ENCODE measurements at regions of chr1 and their contacts with region 1.

Region 1: GRCh38 chr1:25549273-25550154 is 6.1 kb downstream of the LDLRAP1 start:
- DNase-seq: peak; percentile 95
- H3K4me3 Mint-ChIP-seq: peak overlapping the region; percentile 66
- H3K27ac Mint-ChIP-seq: peak overlapping the region; percentile 93
- H3K4me1 Mint-ChIP-seq: peaks cover 86% of the 10 kb centered on the region
- H3K27me3 Mint-ChIP-seq: no peaks in the 10 kb centered on the region

Region 2: DNA sequence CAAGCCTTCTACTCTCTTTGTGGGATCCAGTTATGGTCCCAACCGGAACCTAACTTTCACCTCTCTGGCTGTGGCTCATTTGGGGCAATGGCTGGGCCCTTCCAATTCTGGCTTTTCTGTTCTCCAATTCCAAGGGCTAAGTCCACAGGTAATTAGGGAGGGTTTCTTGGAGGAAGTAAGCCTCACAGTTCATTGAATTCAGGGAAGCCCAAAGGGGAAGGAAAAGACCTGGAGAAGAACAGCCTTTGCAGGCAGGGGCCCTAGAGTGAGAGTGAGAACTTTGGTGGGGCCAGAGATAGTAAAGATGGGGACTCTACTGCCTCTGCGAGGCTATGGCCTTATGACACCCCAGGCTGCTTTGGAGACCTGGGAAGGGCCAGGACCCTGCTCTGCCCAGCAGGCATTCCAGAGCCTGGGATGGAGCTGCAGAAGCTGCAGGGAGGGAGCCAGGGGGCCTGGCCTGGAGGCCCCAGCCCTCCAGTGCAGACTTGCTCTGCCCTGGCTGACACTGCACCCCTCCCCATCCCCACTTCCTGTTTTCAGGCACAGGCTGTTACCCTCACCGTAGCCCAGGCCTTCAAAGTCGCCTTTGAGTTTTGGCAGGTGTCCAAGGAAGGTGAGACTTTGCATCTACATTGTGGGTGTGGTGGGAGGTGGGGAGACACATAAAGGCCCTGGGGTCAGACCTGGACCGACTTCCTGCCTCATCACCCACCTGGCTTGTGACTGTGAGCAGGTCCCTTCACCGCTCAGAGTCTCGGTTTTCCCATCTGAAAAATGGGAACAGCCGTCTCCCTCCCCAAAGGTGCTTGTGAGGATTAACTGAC is 12.8 kb after region 1 on chr1:
- CTCF ChIA-PET with region 1: interaction called, 10 read pairs
- POLR2A ChIA-PET with region 1: interaction called, 8 read pairs
- intact Hi-C with region 1: loop called (anchors 1 kb)
- DNase-seq: peak; percentile 82
- H3K4me3 Mint-ChIP-seq: peak overlapping the region; percentile 62
- H3K27ac Mint-ChIP-seq: peak overlapping the region; percentile 85
- H3K4me1 Mint-ChIP-seq: peaks cover 91% of the 10 kb centered on the region
- H3K27me3 Mint-ChIP-seq: no peaks in the 10 kb centered on the region

Region 3: GRCh38 chr1:25572708-25573600 is 23.4 kb after region 1 on chr1:
- CTCF ChIA-PET with region 1: interaction called, 23 read pairs
- POLR2A ChIA-PET with region 1: interaction called, 4 read pairs
- intact Hi-C with region 1: no loop called
- DNase-seq: peak; percentile 66
- H3K4me3 Mint-ChIP-seq: no peak overlapping the region
- H3K27ac Mint-ChIP-seq: no peak overlapping the region
- H3K4me1 Mint-ChIP-seq: peaks cover 23% of the 10 kb centered on the region
- H3K27me3 Mint-ChIP-seq: no peaks in the 10 kb centered on the region

Region 4: GRCh38 chr1:25675729-25676476 is 126.4 kb after region 1 on chr1:
- CTCF ChIA-PET with region 1: no interaction called
- POLR2A ChIA-PET with region 1: no interaction called
- intact Hi-C with region 1: loop called (anchors 5 kb)
- DNase-seq: peak; percentile 96
- H3K4me3 Mint-ChIP-seq: peak overlapping the region; percentile 59
- H3K27ac Mint-ChIP-seq: peak overlapping the region; percentile 69
- H3K4me1 Mint-ChIP-seq: peaks cover 71% of the 10 kb centered on the region
- H3K27me3 Mint-ChIP-seq: peaks cover 15% of the 10 kb centered on the region

Region 5: DNA sequence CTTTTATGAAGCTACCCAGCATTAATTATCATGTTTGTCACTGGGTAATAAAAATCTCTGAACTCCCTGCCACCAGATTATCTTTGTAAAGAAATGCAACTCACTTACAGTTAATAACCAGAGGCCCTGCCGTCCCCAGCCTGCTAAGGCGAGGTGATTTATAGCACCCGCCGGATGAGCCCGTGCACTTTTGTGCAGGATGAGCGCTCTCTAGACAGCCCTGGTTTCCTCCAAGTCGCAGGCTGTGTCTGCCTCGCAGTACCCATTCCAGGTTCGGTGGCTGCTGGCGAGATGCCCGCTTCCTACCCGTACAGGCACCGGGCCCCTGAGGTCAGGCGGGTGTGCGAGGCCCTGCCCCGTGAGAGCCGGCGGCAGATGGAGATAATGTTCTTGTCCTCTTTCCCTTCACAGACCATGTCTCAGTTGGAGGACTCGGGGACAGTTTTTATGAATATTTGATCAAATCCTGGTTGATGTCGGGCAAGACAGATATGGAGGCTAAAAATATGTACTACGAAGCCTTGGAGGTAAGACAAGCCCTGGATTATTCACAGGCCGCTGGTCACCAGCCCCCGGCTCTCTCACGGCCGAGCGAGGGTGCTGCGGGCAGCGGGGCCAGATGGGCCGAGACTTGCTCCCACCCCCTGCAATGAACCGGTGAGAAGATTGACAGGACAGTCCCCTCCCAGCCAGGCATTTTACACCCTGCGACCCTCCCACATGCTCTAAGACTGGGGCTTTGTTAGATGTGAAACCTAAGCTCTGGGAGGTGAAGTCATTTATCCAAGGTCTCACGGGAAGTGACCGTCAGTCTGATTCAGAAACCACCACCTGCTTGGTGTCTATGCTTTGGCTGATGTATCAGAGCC is 222.0 kb after region 1 on chr1:
- CTCF ChIA-PET with region 1: no interaction called
- POLR2A ChIA-PET with region 1: interaction called, 3 read pairs
- intact Hi-C with region 1: loop called (anchors 1 kb)
- DNase-seq: peak; percentile 30
- H3K4me3 Mint-ChIP-seq: no peak overlapping the region
- H3K27ac Mint-ChIP-seq: no peak overlapping the region
- H3K4me1 Mint-ChIP-seq: peaks cover 58% of the 10 kb centered on the region
- H3K27me3 Mint-ChIP-seq: no peaks in the 10 kb centered on the region

Measured in activated CD4-positive, alpha-beta memory T cell treated with anti-CD3 and anti-CD28 coated beads for 36 hours (primary cell).